Transverse colon (tissue), 4 donors: ENCODE measurements at regions of chr10 and their contacts with region 1.

Region 1: DNA sequence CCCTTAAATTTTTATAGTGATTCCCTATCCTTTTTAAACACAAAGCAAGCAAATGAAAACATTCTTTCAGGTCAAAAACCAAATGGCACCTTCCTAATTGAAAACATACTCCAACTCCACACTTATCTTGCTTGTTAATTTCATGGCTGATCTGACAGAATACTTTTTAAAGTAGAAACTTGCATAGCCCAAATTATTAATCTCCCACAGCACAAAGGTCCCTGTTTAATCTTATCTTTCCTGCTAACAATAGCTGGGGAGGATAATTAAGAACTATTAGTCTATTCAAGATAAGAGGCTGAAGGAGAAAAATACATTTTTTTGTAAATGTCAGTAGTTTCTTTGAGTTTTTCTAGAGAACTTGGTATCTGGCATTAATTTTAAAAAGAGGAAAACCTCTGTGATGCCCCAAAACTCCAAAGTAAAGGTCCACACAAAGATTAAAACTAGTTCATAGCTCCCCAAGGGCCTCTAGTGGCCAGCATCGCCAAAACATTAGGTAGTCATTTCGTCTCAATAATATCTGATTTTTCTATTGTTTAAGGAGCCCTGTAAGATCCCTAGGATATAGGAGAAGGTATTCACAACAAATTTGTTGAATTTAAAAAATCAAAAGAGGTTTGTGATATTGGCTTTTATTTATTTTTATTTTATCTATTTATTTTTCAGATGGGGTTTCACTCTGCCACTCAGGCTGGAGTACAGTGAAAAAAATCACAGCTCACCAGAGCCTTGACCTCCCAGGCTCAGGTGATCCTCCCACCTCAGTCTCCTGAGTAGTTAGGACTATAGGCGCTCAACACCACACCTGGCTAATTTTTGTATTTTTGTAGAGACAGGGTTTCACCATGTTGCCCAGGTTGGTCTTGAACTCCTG is 14.7 kb downstream of the CDNF start:
- DNase-seq: peak; percentile 29
- H3K4me3 ChIP-seq: no peak overlapping the region
- H3K27ac ChIP-seq: no peak overlapping the region
- H3K4me1 ChIP-seq: peaks cover 0 to 13% (median 0%) of the 10 kb centered on the region in 4 donors
- H3K27me3 ChIP-seq: no peaks in the 10 kb centered on the region
- CTCF ChIP-seq: peak; percentile 58 to 70 (median 64)
- EP300 ChIP-seq: no peak
- POLR2A ChIP-seq: no peak

Region 2: DNA sequence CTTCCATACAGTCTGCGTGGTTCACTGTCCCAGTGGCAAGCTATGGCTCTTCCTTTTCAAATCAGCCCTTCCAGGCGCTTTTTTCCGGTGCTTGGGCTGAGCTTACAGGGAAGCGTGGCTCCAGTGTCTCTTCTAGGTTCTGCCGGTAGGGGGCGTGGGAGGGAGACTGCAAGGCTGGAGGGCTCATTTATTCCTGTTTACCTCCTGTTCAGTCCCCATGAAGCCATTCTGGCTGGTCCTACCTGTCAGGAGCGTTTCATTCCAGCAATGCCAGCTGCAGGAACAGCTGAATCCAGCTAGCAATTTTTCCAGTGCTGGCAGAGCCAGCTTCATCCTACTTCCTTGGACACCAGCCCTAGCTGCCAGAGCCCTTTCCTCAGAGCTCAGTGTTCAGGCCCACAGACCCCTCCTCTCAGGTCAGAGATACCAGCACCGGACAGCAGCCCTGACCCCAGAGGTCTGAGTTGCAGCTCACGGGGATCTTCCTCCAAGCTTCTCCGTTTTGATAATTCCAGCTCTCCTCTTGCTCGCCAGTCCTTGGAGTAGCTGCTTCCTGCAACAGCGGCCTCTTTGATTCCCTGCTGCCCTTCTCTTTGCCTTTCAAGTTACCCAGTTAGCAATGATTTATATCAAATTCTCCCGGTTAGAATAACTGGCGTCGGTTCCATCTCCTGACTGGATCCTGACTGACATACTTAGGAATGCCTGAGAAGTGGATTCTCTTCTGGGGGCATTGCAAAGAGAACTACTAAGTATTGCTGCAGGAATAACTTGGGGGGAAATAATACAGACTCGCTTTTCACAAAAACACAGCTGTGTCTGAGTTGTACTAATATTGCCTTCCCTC is 622.2 kb before region 1 on chr10:
- in situ Hi-C with region 1: loop called in 1 of 4 experiments (anchors 25 kb)
- intact Hi-C with region 1: no loop called
- DNase-seq: peak; percentile 8
- H3K4me3 ChIP-seq: no peak overlapping the region
- H3K27ac ChIP-seq: no peak overlapping the region
- H3K4me1 ChIP-seq: no peaks in the 10 kb centered on the region
- H3K27me3 ChIP-seq: peaks cover 32% of the 10 kb centered on the region
- CTCF ChIP-seq: peak in 1 of 5 experiments; percentile 11
- EP300 ChIP-seq: no peak
- POLR2A ChIP-seq: no peak

Region 3: GRCh38 chr10:14500172-14500765 is 322.8 kb before region 1 on chr10:
- in situ Hi-C with region 1: loop called in 2 of 4 experiments (anchors 5 to 10 kb)
- intact Hi-C with region 1: loop called (anchors 10 kb)
- DNase-seq: peak; percentile 58
- H3K4me3 ChIP-seq: no peak overlapping the region
- H3K27ac ChIP-seq: no peak overlapping the region
- H3K4me1 ChIP-seq: peaks cover 0 to 11% (median 5%) of the 10 kb centered on the region in 4 donors
- H3K27me3 ChIP-seq: no peaks in the 10 kb centered on the region
- CTCF ChIP-seq: no peak
- EP300 ChIP-seq: no peak
- POLR2A ChIP-seq: no peak

Region 4: GRCh38 chr10:14507176-14507575 is 315.9 kb before region 1 on chr10:
- in situ Hi-C with region 1: loop called in 2 of 4 experiments (anchors 5 to 10 kb)
- intact Hi-C with region 1: loop called (anchors 10 kb)
- DNase-seq: no peak
- H3K4me3 ChIP-seq: no peak overlapping the region
- H3K27ac ChIP-seq: no peak overlapping the region
- H3K4me1 ChIP-seq: no peaks in the 10 kb centered on the region
- H3K27me3 ChIP-seq: no peaks in the 10 kb centered on the region
- CTCF ChIP-seq: no peak
- EP300 ChIP-seq: no peak
- POLR2A ChIP-seq: no peak

Region 5: GRCh38 chr10:14536241-14537213 is 286.6 kb before region 1 on chr10:
- in situ Hi-C with region 1: loop called in 1 of 4 experiments (anchors 25 kb)
- intact Hi-C with region 1: loop called (anchors 10 kb)
- DNase-seq: peak; percentile 82
- H3K4me3 ChIP-seq: no peak overlapping the region
- H3K27ac ChIP-seq: peak overlapping the region in 2 of 4 donors; percentile 5 to 6
- H3K4me1 ChIP-seq: peaks cover 0 to 30% (median 18%) of the 10 kb centered on the region in 4 donors
- H3K27me3 ChIP-seq: no peaks in the 10 kb centered on the region
- CTCF ChIP-seq: peak; percentile 57 to 65 (median 59)
- EP300 ChIP-seq: no peak
- POLR2A ChIP-seq: no peak

Region 6: DNA sequence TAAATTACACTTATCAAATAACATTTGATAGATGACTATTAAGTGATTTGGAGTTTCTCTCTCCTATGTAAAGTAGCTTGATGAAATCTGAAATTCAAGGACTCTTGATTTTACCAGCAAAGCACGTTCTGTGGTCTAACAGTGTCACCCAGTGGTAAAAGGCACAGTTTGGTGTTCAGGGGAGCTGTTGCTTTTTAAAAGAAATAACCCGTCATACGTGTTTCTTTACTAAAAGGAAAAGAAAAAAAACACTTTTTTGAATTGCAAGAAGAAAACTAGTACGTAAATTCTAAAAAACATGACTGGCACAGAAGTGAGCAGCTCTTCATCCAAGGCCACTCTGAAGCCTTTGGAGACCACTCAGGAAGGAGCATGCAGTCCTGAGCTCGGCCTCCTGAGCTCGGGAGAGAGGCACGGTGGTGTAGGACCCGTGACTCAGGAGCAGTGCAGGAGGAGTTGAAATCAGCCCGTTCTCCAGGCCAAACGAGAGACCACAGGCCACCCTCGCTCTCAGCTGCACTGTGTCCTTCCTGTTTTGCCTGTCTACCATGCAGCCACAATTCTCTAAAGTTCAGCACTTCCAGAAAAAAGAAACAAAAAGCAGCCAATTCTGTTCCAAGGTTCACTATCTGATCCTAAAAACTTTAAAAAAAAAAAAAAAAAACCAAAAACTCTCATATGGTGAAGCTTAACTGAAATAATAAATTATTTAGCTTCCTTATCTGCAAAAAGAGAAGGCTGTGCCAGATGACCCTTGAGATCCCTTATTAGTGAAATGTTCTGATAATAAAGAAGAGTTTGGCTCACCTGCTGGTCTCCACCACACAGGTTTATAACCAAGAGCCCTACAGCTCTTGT is 279.8 kb before region 1 on chr10:
- in situ Hi-C with region 1: loop called in 1 of 4 experiments (anchors 25 kb)
- intact Hi-C with region 1: loop called (anchors 10 kb)
- DNase-seq: no peak
- H3K4me3 ChIP-seq: no peak overlapping the region
- H3K27ac ChIP-seq: peak overlapping the region in 2 of 4 donors; percentile 36 to 60
- H3K4me1 ChIP-seq: peaks cover 0 to 14% (median 0%) of the 10 kb centered on the region in 4 donors
- H3K27me3 ChIP-seq: no peaks in the 10 kb centered on the region
- CTCF ChIP-seq: peak in 3 of 5 experiments; percentile 19 to 29 (median 20)
- EP300 ChIP-seq: no peak
- POLR2A ChIP-seq: no peak

Region 7: GRCh38 chr10:14936584-14936983 is 113.5 kb after region 1 on chr10:
- in situ Hi-C with region 1: no loop called
- intact Hi-C with region 1: no loop called
- DNase-seq: no peak
- H3K4me3 ChIP-seq: no peak overlapping the region
- H3K27ac ChIP-seq: no peak overlapping the region
- H3K4me1 ChIP-seq: no peaks in the 10 kb centered on the region
- H3K27me3 ChIP-seq: no peaks in the 10 kb centered on the region
- CTCF ChIP-seq: no peak
- EP300 ChIP-seq: no peak
- POLR2A ChIP-seq: no peak